Endothelial cell of umbilical vein (primary cell): ENCODE measurements at regions of chr10 and their contacts with region 1.

Region 1: DNA sequence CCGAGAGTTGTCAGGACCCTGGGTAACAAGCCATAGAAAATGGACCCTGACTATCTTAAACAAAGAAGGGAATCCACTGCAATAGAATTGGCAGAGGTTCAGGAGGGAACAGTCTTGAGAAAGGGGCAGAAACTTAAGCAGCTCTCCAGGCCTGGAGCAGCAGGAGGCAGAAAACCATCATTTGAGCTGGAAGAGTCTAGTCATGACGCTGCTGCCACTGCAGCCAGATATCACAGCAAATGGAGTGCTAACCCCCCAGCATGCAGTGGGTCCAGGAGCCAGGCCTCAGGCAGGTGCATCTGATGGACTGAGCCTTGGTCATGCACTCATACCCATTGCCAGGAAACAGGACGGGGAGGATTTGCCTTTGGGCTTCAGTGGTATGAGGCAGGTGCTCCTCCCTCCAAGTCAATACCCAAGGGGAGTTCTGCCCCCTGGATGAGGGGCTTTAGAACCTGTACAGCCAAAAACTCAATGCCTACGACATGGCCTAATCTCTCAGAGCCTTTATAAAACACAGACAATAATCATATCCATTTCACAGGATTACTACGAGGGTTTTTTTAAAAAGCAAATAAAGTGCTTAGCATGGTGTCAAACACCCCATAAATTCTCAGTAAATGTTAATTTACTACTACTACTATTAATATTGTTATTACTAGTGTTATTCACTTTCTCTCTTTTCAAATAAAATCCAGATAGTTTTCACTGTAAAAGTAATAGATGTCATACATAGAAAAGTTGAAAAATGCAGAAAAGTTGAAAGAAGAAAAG is 30.7 kb downstream of the DUSP5 start:
- DNase-seq: no peak
- H3K4me3 ChIP-seq: no peak overlapping the region
- H3K27ac ChIP-seq: peak overlapping the region; percentile 90
- H3K4me1 ChIP-seq: peaks cover 55% of the 10 kb centered on the region
- H3K27me3 ChIP-seq: no peaks in the 10 kb centered on the region
- CTCF ChIP-seq: no peak
- POLR2A ChIP-seq: no peak

Region 2: GRCh38 chr10:110368002-110368401 is 160.4 kb before region 1 on chr10:
- CTCF ChIA-PET with region 1: no interaction called
- POLR2A ChIA-PET with region 1: no interaction called
- dilution Hi-C with region 1: no loop called
- intact Hi-C with region 1: no loop called
- DNase-seq: peak; percentile 86
- H3K4me3 ChIP-seq: no peak overlapping the region
- H3K27ac ChIP-seq: no peak overlapping the region
- H3K4me1 ChIP-seq: peaks cover 6% of the 10 kb centered on the region
- H3K27me3 ChIP-seq: no peaks in the 10 kb centered on the region
- CTCF ChIP-seq: peak in 1 of 2 donors; percentile 14
- POLR2A ChIP-seq: no peak

Region 3: GRCh38 chr10:110408203-110408751 is 120.1 kb before region 1 on chr10:
- CTCF ChIA-PET with region 1: no interaction called
- POLR2A ChIA-PET with region 1: no interaction called
- dilution Hi-C with region 1: no loop called
- intact Hi-C with region 1: no loop called
- DNase-seq: peak; percentile 57
- H3K4me3 ChIP-seq: no peak overlapping the region
- H3K27ac ChIP-seq: peak overlapping the region; percentile 37
- H3K4me1 ChIP-seq: peaks cover 43% of the 10 kb centered on the region
- H3K27me3 ChIP-seq: no peaks in the 10 kb centered on the region
- CTCF ChIP-seq: no peak
- POLR2A ChIP-seq: no peak

Region 4: GRCh38 chr10:110502851-110503301 is 25.5 kb before region 1 on chr10:
- CTCF ChIA-PET with region 1: interaction called, 6 read pairs
- POLR2A ChIA-PET with region 1: no interaction called
- dilution Hi-C with region 1: no loop called
- intact Hi-C with region 1: loop called (anchors 1 kb)
- DNase-seq: peak; percentile 49
- H3K4me3 ChIP-seq: no peak overlapping the region
- H3K27ac ChIP-seq: peak overlapping the region; percentile 92
- H3K4me1 ChIP-seq: peaks cover 69% of the 10 kb centered on the region
- H3K27me3 ChIP-seq: no peaks in the 10 kb centered on the region
- CTCF ChIP-seq: no peak
- POLR2A ChIP-seq: no peak

Region 5: GRCh38 chr10:110512461-110513187 is 15.8 kb before region 1 on chr10:
- CTCF ChIA-PET with region 1: interaction called, 9 read pairs
- POLR2A ChIA-PET with region 1: interaction called, 3 read pairs
- dilution Hi-C with region 1: no loop called
- intact Hi-C with region 1: loop called (anchors 1 kb)
- DNase-seq: peak; percentile 70
- H3K4me3 ChIP-seq: no peak overlapping the region
- H3K27ac ChIP-seq: peak overlapping the region; percentile 94
- H3K4me1 ChIP-seq: peaks cover 39% of the 10 kb centered on the region
- H3K27me3 ChIP-seq: no peaks in the 10 kb centered on the region
- CTCF ChIP-seq: no peak
- POLR2A ChIP-seq: no peak

Region 6: DNA sequence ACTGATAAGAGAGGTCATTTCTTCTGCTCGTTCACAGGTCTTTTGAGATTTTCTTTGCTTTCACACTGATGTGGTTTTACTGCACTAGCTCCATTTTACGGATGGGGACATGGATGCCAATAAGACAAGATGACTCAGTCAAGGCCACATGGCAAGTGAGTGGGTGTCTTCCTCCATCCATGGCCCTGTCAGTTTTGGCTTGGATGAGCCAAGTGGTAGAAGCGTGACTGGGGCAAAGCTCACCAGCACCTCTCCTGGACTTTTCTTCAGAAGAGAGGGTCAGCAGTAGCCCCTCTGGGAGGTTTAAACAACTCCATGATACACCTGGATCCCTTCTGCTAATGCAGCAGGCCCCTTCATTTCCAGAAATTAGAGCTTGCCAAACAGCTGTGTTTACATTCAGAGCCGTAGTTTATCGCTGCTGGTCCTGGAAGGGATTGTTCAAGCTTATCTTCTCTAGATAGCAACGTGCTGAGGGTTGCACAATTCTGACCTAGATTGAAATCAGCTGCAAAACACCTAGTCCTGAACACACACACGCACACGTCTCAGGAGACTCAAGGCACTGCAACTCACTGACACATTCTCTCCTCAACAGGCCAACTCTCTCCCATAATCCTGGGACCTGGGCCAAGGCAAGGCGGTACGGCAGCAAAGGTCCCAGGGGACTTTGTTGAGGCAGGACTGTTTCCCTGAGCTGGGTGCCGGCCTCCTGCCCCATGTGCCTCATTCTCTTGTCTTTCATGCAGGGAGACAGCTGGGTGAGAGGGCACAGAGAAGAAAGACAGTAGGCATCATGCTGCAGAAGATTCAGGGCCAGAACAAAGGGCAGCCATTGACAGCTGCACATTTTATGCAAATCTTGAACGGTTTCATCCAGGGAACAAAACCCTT is 329.1 kb after region 1 on chr10:
- CTCF ChIA-PET with region 1: no interaction called
- POLR2A ChIA-PET with region 1: no interaction called
- dilution Hi-C with region 1: no loop called
- intact Hi-C with region 1: no loop called
- DNase-seq: peak; percentile 14
- H3K4me3 ChIP-seq: no peak overlapping the region
- H3K27ac ChIP-seq: no peak overlapping the region
- H3K4me1 ChIP-seq: no peaks in the 10 kb centered on the region
- H3K27me3 ChIP-seq: peaks cover 0 to 5% of the 10 kb centered on the region in 2 experiments
- CTCF ChIP-seq: no peak
- POLR2A ChIP-seq: no peak